ENCODE measurements at regions of chr6 and their contacts with region 1.

Region 1: DNA sequence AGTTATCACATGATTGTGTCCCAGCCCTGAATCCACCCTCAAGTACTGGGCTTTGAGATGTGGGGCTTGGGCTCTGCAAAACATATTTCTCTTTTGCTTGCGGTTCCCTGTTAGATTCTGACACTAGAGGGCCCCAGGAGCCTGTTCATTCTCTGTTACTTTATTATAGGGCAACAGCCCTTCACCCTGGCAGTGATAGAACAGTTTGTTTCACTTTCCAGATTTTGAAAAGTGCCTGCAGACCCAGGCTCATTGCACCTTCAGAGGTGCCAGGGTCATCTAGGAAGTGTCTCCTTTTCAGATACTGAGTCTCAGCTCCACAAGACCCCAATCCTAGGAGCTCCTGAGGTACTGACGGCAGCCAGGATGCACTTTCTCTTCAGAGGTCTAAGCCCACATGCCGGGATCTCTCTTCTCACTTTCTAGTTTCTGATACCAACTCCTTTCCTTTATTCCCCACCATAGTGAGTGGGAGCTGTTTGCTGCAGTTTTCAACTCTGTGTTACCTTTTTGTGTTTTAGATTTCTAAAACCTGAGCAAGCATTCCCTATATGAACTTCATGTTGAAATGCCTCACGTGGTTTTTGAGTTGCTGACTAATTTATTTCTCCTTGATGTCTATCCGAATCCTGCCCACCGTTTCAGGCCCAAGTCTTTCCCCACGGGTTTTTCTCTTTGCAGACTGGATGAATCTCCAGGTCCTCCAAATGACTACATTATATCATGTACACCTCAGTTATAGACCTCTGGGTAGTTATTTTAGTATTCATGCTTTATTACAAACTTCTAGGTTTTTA is 10.9 kb downstream of the ABT1 start:
- DNase-seq: peak; percentile 58
- ATAC-seq: peak; percentile 99
- H3K4me3 ChIP-seq: peak overlapping the region; percentile 44
- H3K27ac ChIP-seq: no peak overlapping the region
- H3K4me1 ChIP-seq: no peaks in the 10 kb centered on the region
- H3K27me3 ChIP-seq: peaks cover 17% of the 10 kb centered on the region
- CTCF ChIP-seq: peak; percentile 85
- POLR2A ChIP-seq: no peak
- RAD21 ChIP-seq: peak; percentile 83

Region 2: DNA sequence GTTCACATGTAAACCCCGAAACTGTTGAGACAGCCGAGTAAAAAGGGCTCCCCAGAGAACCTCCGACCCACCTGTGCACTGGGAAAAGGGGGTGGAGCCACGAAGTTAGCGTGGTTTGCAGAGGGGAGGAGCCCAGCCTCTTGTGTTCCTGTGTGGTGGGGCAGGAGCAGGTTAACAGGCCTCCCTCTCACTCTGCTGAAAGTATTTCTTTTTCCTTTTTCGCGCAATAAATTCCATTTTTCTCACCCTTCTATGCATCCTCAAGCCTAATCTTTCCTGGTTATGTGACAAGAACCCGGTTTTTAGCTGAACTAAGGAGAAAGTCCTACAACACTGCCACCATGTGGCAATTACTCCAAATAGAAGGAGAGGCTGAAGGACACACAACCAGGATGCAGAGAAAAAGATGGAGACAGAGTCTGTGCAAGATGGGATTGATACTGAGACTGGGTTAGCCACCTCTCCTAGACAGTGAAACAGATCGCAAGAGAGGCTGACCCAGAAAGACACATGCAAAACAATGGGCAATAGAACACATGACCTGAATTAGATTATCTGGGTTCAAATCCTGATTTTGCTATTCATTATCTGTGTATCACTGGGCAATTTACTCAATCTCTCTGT is 471.2 kb after region 1 on chr6:
- CTCF ChIA-PET with region 1: interaction called, 7 read pairs
- POLR2A ChIA-PET with region 1: no interaction called
- dilution Hi-C with region 1: no loop called
- in situ Hi-C with region 1: loop called (anchors 5 kb)
- intact Hi-C with region 1: loop called (anchors 1 kb)
- DNase-seq: peak; percentile 68
- ATAC-seq: peak; percentile 98
- H3K4me3 ChIP-seq: no peak overlapping the region
- H3K27ac ChIP-seq: no peak overlapping the region
- H3K4me1 ChIP-seq: no peaks in the 10 kb centered on the region
- H3K27me3 ChIP-seq: peaks cover 5% of the 10 kb centered on the region
- CTCF ChIP-seq: peak; percentile 73
- POLR2A ChIP-seq: no peak
- RAD21 ChIP-seq: peak; percentile 74